Pancreas (tissue), 10 donors: ENCODE measurements at regions of chr2 and their contacts with region 1.

Region 1: GRCh38 chr2:29841386-29842004 is 79.9 kb downstream of the ALK start:
- DNase-seq: peak in 1 of 6 donors; percentile 43
- ATAC-seq: peak in 3 of 4 donors; percentile 74 to 89 (median 87)
- H3K4me3 ChIP-seq: no peak overlapping the region
- H3K27ac ChIP-seq: no peak overlapping the region
- H3K4me1 ChIP-seq: no peaks in the 10 kb centered on the region
- H3K27me3 ChIP-seq: no peaks in the 10 kb centered on the region
- CTCF ChIP-seq: peak; percentile 70 to 87 (median 84)

Region 2: DNA sequence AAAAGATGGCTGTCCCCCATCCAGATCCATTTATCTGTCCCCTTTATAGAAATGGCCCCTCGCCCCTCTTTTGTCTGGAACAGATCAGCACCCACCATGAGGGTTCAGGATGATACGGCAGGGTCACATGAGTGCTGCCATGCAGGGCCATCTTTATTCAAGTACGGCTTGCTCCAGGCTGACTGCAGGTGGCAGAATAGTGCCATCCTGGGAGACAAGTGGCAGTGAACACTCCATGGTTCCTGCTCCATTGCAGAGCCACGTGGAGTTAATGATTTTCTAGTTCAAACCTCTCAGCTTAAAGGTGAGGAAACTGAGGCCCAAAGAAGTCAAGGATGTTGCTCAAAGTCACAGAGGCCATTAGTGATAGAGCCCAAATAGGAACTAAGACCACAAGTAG is 545.6 kb before region 1 on chr2:
- intact Hi-C with region 1: loop called in 2 of 3 experiments (anchors 10 kb)
- DNase-seq: peak in 3 of 6 donors; percentile 11 to 44 (median 33)
- ATAC-seq: peak in 3 of 4 donors; percentile 78 to 94 (median 86)
- H3K4me3 ChIP-seq: no peak overlapping the region
- H3K27ac ChIP-seq: no peak overlapping the region
- H3K4me1 ChIP-seq: no peaks in the 10 kb centered on the region
- H3K27me3 ChIP-seq: no peaks in the 10 kb centered on the region
- CTCF ChIP-seq: peak in 2 of 4 donors; percentile 14 to 35

Region 3: GRCh38 chr2:29309090-29310029 is 532.1 kb before region 1 on chr2:
- intact Hi-C with region 1: loop called in 1 of 3 experiments (anchors 10 kb)
- DNase-seq: peak in 4 of 6 donors; percentile 39 to 68 (median 54)
- ATAC-seq: peak; percentile 72 to 89 (median 85)
- H3K4me3 ChIP-seq: no peak overlapping the region
- H3K27ac ChIP-seq: peak overlapping the region in 3 of 4 donors; percentile 6 to 63 (median 14)
- H3K4me1 ChIP-seq: peaks cover 6 to 17% (median 16%) of the 10 kb centered on the region in 3 donors
- H3K27me3 ChIP-seq: no peaks in the 10 kb centered on the region
- CTCF ChIP-seq: peak; percentile 28 to 64 (median 46)